ENCODE measurements at regions of chr12 and their contacts with region 1.

Region 1: GRCh38 chr12:84502907-84503787 is 409.5 kb downstream of the SLC6A15 start:
- DNase-seq: peak; percentile 66
- H3K4me3 ChIP-seq: no peak overlapping the region
- H3K27ac ChIP-seq: peak overlapping the region; percentile 10
- H3K4me1 ChIP-seq: peaks cover 19% of the 10 kb centered on the region
- H3K27me3 ChIP-seq: no peaks in the 10 kb centered on the region
- CTCF ChIP-seq: peak; percentile 56 to 59

Region 2: DNA sequence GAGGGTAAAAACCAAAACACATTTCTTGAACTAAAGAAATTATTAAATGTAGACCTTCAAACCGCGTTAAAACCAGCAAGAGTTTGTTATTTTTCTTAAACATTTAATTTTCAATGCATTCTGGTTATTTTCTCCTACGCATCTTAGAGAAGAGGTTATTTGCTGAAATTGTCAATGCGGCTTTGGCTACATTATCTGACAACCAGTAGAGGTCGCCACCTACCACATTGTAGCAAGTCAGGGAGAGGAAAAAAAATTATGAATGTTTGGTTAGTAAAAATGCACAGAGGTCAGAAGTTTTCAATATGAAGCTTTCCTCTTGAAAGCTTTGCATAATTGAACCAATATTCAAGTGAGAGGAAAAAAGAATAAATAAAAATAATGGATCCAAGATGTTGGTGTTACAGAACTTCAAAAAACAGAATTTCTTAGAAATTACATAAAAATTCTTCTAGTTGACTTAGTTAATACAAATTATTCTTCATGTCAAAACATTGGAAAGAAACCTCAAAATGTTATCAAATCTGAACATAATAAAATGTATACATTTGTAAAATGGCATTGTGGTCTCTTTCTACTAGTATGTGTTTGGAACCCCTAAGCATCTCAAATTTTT is 1975.9 kb before region 1 on chr12:
- CTCF ChIA-PET with region 1: no interaction called
- dilution Hi-C with region 1: no loop called
- in situ Hi-C with region 1: no loop called
- intact Hi-C with region 1: loop called (anchors 10 kb)
- DNase-seq: peak; percentile 41
- H3K4me3 ChIP-seq: no peak overlapping the region
- H3K27ac ChIP-seq: no peak overlapping the region
- H3K4me1 ChIP-seq: no peaks in the 10 kb centered on the region
- H3K27me3 ChIP-seq: peaks cover 5% of the 10 kb centered on the region
- CTCF ChIP-seq: peak; percentile 88 to 94

Region 3: DNA sequence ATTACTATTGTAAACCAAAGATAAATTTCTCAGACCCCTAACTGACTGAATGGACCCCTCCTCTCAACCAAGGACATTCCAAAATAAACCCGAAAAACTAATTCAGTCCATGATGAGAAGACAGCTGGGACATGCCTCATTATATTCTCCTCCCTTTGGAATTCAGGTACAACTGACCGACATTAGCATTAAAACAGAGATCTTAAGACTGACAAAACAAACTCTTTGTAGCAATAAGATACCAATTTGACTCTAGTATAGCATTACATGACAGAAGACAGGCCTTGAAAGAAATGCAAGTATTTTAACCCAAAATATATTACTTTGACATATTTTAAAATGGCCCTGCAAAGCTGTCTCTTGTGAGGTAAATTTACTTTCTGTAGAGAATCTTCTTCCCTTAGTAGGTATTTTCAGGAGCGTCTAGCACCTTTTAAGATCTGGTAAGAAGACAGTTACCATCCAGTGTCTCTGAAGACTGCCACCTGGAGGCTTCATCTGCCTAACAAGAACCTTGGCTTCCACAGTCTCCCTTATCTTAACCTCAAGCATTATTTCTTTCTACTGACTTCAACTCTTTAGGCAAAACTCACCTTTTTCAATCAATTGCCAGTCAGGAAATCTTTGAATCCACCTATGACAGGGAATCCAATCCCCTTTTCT is 548.1 kb before region 1 on chr12:
- CTCF ChIA-PET with region 1: no interaction called
- dilution Hi-C with region 1: no loop called
- in situ Hi-C with region 1: no loop called
- intact Hi-C with region 1: loop called (anchors 10 kb)
- DNase-seq: peak; percentile 12
- H3K4me3 ChIP-seq: no peak overlapping the region
- H3K27ac ChIP-seq: no peak overlapping the region
- H3K4me1 ChIP-seq: no peaks in the 10 kb centered on the region
- H3K27me3 ChIP-seq: no peaks in the 10 kb centered on the region
- CTCF ChIP-seq: peak in 1 of 2 donors; percentile 52

Region 4: DNA sequence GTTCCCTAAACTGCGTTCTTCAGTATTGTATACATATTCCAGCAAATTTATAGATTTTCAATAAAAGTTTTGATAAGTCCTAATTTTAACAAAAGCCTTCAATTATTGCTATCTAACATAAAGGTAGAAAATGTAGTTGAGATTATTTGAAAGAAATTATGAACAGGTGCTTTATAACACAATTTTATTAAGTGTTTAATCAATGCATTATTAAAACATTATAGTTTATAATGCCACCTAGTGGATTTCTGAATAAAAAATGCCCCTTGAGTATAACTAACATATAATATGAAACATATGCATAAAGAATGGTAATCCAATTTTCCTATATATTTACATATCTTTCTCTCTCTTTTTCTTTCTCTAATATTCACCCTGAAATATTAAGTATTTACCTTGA is 105.9 kb before region 1 on chr12:
- CTCF ChIA-PET with region 1: no interaction called
- dilution Hi-C with region 1: no loop called
- in situ Hi-C with region 1: no loop called
- intact Hi-C with region 1: loop called (anchors 10 kb)
- DNase-seq: no peak
- H3K4me3 ChIP-seq: no peak overlapping the region
- H3K27ac ChIP-seq: no peak overlapping the region
- H3K4me1 ChIP-seq: no peaks in the 10 kb centered on the region
- H3K27me3 ChIP-seq: no peaks in the 10 kb centered on the region
- CTCF ChIP-seq: peak; percentile 15 to 30

Region 5: DNA sequence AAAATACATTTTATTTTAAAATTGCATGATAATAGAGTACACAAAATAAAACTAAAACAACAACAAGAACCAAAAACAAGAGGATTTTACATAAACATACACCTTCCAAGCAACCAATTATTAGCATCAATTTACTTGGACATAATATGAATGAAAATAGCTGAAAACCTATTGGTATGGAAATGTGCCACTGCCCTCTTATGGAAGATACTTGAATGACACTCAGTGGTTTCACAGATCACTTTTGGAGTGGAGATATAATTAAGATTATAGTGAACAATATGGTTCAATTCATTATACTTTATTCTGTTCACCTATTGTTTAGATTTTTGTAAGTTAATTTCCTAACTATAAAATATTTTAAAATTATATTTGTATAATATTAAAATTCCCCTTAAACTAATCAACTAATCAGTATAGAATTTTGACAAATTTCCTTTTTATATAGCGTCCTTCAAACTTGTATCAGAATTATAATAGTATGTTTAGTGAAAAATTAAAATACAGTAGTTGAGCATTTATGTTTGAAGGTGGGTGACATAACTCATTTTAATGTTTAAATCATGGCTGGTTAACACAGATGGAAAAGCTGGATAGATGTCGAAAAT is 339.4 kb after region 1 on chr12:
- CTCF ChIA-PET with region 1: interaction called, 6 read pairs
- dilution Hi-C with region 1: no loop called
- in situ Hi-C with region 1: loop called in 1 of 2 experiments (anchors 10 kb)
- intact Hi-C with region 1: loop called (anchors 1 kb)
- DNase-seq: peak; percentile 30
- H3K4me3 ChIP-seq: no peak overlapping the region
- H3K27ac ChIP-seq: no peak overlapping the region
- H3K4me1 ChIP-seq: no peaks in the 10 kb centered on the region
- H3K27me3 ChIP-seq: no peaks in the 10 kb centered on the region
- CTCF ChIP-seq: peak; percentile 81

Measured in mammary epithelial cell (primary cell).